ENCODE measurements at regions of chr16 and their contacts with region 1.

Region 1: GRCh38 chr16:50539822-50540710 is 8.1 kb upstream of the NKD1 start:
- DNase-seq: peak in 4 of 5 donors; percentile 12 to 30 (median 22)
- H3K4me3 ChIP-seq: no peak overlapping the region
- H3K27ac ChIP-seq: no peak overlapping the region
- H3K4me1 ChIP-seq: no peaks in the 10 kb centered on the region
- H3K27me3 ChIP-seq: no peaks in the 10 kb centered on the region
- CTCF ChIP-seq: no peak

Region 2: DNA sequence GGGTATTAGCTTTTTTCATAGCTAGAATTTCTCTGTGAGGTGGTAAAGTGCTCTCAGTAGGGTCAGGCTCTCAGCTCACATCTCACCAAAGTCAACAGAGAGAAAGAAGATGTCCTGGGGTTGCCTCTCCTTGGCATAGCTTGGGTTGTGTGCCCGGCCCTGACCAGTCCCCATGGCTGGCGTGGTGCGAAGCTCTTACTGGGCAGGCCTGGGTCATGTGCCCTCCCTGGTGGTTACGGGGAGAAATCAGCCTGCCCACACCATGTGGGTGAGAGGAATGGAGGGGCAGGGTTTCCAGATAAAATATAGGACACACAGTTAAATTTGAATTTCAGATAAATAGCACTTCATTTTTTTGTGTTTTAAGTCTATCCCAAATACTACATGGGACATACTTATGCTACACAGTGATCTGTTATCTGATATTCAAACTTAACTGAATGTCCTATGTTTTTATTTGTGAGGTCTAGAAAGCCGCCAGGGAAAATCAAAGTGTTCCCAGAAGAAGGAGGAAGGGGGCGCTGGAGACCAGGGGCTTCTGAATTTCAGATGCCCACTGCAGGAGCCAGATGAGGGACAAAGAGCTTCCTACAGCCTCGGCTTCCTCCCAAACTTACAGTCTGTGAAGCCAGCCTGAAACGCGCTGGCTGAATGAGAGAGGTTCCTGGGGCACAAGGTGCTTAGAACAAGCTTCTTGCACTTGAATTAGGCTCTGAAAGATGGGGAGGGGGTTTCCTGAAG is 53.5 kb after region 1 on chr16:
- intact Hi-C with region 1: loop called (anchors 5 kb)
- DNase-seq: peak in 2 of 5 donors; percentile 36 to 48
- H3K4me3 ChIP-seq: no peak overlapping the region
- H3K27ac ChIP-seq: no peak overlapping the region
- H3K4me1 ChIP-seq: no peaks in the 10 kb centered on the region
- H3K27me3 ChIP-seq: no peaks in the 10 kb centered on the region
- CTCF ChIP-seq: no peak